Aorta (tissue), 5 donors: ENCODE measurements at regions of chr17 and their contacts with region 1.

Region 1: DNA sequence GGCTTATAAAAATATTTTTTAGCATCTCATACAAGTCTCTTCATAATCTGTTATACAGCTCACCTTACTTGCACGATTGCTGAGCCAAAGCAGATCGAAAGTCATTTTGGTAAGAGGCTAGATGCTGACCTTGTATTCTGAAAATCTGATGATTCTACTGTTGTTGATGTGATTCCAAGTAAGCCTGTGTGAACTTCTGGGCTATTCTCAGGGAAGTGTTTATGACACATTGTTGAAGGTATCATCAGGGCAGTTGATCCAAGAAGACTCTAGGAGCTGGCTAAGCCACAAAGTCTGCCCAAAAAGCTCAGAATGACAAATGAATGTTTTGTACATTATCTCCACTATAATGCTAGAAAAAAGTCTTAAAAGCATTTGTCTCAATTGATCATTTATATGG is 16.0 kb downstream of the OMG start:
- DNase-seq: no peak
- ATAC-seq: no peak
- H3K4me3 ChIP-seq: no peak overlapping the region
- H3K27ac ChIP-seq: no peak overlapping the region
- H3K4me1 ChIP-seq: no peaks in the 10 kb centered on the region
- H3K27me3 ChIP-seq: no peaks in the 10 kb centered on the region

Region 2: GRCh38 chr17:31339906-31340661 is 59.0 kb after region 1 on chr17:
- intact Hi-C with region 1: loop called in 1 of 2 experiments (anchors 2 kb)
- DNase-seq: no peak
- ATAC-seq: no peak
- H3K4me3 ChIP-seq: no peak overlapping the region
- H3K27ac ChIP-seq: no peak overlapping the region
- H3K4me1 ChIP-seq: no peaks in the 10 kb centered on the region
- H3K27me3 ChIP-seq: no peaks in the 10 kb centered on the region